Right ventricle myocardium inferior (tissue), 1 donor: ENCODE measurements at regions of chr13 and their contacts with region 1.

Region 1: GRCh38 chr13:28819735-28820098 is 422 bp upstream of the MTUS2 start:
- DNase-seq: peak; percentile 68
- ATAC-seq: peak; percentile 94

Region 2: DNA sequence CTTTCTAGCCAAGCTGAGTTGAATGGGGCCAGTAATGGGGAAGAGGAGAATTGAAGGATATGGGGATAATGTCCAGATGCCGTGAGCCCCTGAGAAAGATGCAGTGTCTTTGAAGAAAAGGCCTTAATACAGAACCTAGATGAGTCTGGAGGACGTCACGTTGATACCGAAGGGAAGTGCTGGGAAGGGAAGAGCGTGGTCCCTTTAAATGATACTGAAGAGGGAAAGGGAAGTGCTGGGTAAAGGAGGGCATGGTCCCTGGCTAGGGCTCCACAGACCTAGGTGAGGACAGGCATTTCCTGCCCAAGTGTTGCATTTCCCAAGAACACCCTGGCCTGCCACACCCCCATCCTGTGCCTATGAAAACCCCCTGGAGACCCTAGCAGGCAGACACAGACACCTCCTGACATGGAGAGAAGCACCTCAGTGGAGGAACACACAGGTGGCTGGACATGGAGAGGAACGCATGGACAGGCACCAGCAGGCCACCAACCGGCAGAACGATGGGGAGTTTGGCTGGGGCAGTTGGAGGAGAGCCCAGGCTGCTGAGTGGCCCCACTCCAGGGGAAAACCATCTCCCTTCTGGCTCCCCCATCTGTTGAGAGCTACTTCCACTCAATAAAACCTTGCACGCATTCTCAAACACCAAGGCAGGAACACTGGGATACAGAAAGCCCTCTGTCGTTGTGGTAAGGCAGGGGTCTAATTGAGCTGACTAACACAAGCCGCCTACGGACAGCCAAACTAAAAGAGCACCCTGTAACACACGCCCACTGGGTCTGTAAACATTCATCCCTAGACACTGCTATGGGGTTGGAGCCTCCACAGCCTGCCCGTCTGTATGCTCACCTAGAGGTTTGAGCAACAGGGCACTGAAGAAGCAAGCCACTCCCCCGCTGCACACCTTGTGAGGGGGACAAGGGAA is 195.7 kb before region 1 on chr13:
- intact Hi-C with region 1: no loop called
- DNase-seq: no peak
- ATAC-seq: no peak

Region 3: DNA sequence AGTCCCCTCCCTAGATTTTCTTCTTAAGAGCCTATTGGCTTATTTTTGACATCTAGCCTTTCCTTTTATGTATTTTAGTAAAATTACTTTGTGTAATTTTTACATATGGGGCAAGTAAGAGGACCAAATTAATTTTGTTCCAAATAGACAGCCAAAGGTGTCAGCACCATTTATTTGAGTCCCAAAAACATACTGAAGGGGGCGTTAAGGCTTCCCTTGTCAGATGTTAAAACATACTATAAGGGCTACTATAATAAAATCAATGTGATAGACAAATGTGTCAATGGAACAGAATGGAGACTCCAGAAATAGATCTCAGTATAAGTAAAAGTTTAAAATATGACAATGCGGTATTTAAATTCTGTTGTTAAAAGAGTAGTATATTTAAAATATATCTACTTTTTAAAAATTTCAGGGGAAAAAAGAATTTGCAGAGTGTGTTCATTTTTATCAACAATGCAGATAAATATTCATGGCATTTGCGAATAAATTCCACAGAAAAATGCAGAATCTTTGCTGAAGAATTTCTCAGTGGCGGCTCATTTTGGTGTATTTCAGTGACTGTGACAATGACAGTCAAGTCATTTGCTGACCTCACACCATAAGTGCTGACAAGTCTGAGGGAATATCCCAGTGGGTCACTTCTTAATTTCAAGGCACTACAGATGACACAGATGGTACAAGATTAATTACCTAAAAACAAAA is 134.1 kb after region 1 on chr13:
- intact Hi-C with region 1: loop called (anchors 1 kb)
- DNase-seq: no peak
- ATAC-seq: no peak

Region 4: GRCh38 chr13:29065142-29065541 is 245.4 kb after region 1 on chr13:
- intact Hi-C with region 1: no loop called
- DNase-seq: no peak
- ATAC-seq: no peak

Region 5: DNA sequence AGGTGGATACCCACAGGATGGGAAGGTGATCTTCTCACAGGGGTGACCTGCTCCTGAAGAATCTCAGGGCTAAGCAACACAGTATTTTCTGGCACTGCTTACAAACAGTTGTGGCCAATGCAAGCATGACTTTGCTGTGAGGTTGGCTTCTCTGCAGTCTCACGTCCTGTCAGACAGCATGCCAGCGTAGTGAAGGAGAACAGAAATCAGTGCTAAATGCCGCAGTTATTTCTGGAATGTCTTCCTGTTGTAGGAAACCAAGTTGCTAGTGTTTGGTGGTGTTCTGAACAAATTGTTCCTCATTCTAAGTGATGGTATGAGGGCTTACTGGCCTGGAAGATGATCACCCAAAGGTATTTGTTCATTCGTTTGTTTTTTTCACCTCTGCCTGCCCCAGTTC is 320.6 kb after region 1 on chr13:
- intact Hi-C with region 1: loop called (anchors 5 kb)
- DNase-seq: no peak
- ATAC-seq: peak; percentile 90

Region 6: GRCh38 chr13:29260683-29261082 is 441.0 kb after region 1 on chr13:
- intact Hi-C with region 1: loop called (anchors 5 kb)
- DNase-seq: no peak
- ATAC-seq: peak; percentile 66

Region 7: GRCh38 chr13:29369060-29369743 is 549.5 kb after region 1 on chr13:
- intact Hi-C with region 1: loop called (anchors 5 kb)
- DNase-seq: no peak
- ATAC-seq: peak; percentile 39